ENCODE measurements at regions of chr21 and their contacts with region 1.

Region 1: GRCh38 chr21:39956586-39956985 is 89.3 kb downstream of the PCP4 start:
- DNase-seq: no peak
- ATAC-seq: no peak
- H3K4me3 ChIP-seq: no peak overlapping the region
- H3K27ac ChIP-seq: no peak overlapping the region
- H3K4me1 ChIP-seq: no peaks in the 10 kb centered on the region
- H3K27me3 ChIP-seq: peaks cover 0 to 3% (median 0%) of the 10 kb centered on the region in 9 donors
- CTCF ChIP-seq: no peak
- POLR2A ChIP-seq: no peak

Region 2: GRCh38 chr21:39927304-39927886 is 29.2 kb before region 1 on chr21:
- intact Hi-C with region 1: loop called in 1 of 10 experiments (anchors 1 kb)
- DNase-seq: peak in 2 of 5 donors; percentile 40 to 45
- ATAC-seq: peak in 3 of 4 donors; percentile 46 to 62 (median 47)
- H3K4me3 ChIP-seq: no peak overlapping the region
- H3K27ac ChIP-seq: no peak overlapping the region
- H3K4me1 ChIP-seq: no peaks in the 10 kb centered on the region
- H3K27me3 ChIP-seq: no peaks in the 10 kb centered on the region
- CTCF ChIP-seq: no peak
- POLR2A ChIP-seq: no peak